Activated CD4-positive, alpha-beta T cell treated with anti-CD3 and anti-CD28 coated beads, Interleukin-2, amount 10 ng/mL, durations not matched to agents 24 days and 14 days (primary cell): ENCODE measurements at regions of chr7 and their contacts with region 1.

Region 1: DNA sequence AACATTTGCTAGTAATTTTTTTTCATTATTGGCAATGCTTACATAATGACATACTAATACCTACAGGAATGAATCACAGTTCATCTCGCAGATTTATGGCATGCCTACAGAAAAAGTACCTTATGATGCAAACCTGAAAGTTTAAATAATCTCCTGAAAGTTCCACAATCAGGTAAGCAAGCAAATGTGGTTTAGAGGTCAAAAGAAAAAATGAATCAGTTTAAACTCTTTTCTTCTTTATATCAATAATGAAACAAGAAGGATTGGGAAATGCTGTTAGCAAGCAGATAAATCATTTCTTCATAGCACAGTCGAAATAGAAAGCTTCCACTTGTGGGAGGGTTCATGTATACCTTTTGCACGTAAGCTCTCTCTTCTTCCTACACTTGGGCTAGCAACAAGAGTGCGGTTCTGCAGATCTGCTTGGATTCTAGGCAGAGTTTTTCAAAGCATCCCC is 53.7 kb upstream of the MTPN start:
- DNase-seq: peak; percentile 57
- H3K4me3 Mint-ChIP-seq: peak overlapping the region; percentile 27
- H3K27ac Mint-ChIP-seq: peak overlapping the region; percentile 77
- H3K4me1 Mint-ChIP-seq: peaks cover 13% of the 10 kb centered on the region
- H3K27me3 Mint-ChIP-seq: no peaks in the 10 kb centered on the region

Region 2: DNA sequence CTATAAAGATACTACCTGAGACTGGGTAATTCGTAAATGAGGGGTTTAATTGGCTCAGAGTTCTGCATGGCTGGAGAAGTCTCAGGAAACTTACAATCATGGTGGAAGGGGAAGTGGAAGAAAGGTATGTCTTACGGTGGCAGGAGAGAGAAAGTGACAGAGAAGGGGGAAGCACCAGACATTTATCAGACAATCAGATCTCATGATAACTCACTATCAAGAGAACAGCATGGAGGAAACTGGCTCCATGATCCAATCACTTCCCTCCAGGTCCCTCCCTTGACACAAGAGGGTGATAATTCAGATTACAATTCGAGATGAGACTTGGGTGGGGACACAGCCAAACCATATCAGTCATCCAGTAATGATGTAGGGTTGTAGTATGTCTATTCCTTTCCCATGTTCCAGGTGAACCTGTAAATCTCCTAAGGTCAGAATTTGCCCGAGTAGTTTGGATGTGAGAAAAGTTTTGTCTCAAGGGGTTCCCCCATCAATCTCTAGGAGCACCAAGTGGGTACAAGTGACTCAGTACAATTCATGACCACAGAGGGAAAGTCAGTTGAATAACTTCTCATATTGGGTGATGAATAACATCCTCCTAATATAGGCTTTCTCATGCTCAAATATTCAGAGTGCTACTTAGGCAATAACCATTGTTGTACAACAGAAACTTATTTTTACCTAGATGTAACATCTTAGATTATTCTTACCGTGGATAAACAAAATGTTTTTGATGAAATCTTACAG is 14.1 kb before region 1 on chr7:
- intact Hi-C with region 1: loop called (anchors 1 kb)
- DNase-seq: no peak
- H3K4me3 Mint-ChIP-seq: no peak overlapping the region
- H3K27ac Mint-ChIP-seq: no peak overlapping the region
- H3K4me1 Mint-ChIP-seq: peaks cover 3% of the 10 kb centered on the region
- H3K27me3 Mint-ChIP-seq: peaks cover 8% of the 10 kb centered on the region

Region 3: DNA sequence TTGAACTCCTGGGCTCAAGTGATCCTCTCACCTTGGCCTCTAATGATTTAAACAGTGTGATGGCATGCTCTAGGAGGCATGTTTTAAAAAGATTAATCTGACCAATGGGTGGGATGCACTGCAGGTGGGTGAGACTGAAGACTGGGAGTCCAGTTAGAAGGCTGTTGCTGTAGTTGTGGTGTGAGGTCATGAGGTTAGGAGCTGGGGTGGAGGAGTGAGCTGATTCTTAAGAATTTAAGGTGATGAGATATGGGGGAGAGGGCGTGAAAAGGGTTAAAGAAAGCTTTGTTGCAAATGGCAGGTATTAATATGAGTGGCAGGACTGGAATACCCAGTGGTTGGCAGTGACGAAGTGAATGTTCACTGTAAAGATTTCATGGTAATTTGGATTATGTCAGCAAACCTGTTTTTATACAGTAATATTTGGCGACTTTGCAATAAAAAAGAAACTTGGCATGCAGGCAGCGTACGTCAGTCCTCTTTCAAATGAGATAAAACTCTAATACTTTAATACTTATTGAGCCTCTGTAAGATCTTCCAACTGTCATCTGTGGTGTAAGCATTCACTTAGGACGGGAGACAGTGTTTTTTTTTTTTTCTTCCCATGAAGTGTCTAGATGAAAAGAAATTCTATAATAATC is 19.0 kb after region 1 on chr7:
- intact Hi-C with region 1: no loop called
- DNase-seq: no peak
- H3K4me3 Mint-ChIP-seq: no peak overlapping the region
- H3K27ac Mint-ChIP-seq: no peak overlapping the region
- H3K4me1 Mint-ChIP-seq: no peaks in the 10 kb centered on the region
- H3K27me3 Mint-ChIP-seq: no peaks in the 10 kb centered on the region